CD4-positive, alpha-beta T cell (primary cell): ENCODE measurements at regions of chr9 and their contacts with region 1.

Region 1: DNA sequence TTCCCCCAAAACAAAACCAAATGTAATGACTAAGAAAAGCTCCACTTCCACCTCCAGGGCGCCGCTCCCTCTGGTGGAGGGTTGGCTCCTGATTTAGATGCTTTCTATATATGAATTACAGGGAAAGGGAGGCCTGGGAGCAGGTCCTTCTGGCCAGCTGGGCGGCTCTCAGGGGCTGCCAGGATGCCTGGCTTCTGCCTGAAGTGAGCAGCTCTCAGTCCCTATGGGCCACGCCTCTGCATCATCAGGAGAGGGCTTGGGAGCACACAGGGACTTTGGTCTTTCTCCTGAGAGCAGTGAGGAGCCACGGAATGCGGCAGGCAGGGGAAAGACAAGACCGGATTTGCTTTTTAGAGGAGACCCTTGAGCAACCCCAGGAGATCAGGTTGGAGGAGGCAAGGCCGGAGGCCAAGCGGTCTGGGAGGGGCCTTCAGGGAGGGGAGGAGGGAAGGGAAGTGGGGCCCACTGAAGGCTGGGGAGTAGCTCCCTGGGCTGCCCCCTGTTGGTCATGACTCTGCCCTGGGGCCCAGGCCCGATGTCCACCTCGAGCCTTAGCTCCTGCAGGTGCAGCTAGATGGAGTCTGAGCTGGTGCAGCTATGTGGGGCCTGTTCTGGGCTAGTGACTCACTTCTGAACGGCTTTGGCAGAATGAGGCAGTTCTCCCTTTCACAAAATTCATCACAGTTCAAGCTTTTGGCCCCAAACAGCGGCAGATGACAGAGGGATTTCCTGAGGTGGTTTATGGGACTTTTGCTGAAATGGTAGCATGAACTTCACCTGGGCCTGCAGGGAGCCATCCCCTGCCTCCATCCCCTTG is 11.3 kb upstream of the GRHPR start:
- DNase-seq: no peak
- ATAC-seq: no peak
- H3K4me3 ChIP-seq: no peak overlapping the region
- H3K4me3 Mint-ChIP-seq: no peak overlapping the region
- H3K27ac ChIP-seq: no peak overlapping the region
- H3K27ac Mint-ChIP-seq: no peak overlapping the region
- H3K4me1 ChIP-seq: peaks cover 29% of the 10 kb centered on the region
- H3K4me1 Mint-ChIP-seq: peaks cover 13% of the 10 kb centered on the region
- H3K27me3 ChIP-seq: no peaks in the 10 kb centered on the region
- H3K27me3 Mint-ChIP-seq: no peaks in the 10 kb centered on the region
- CTCF ChIP-seq: no peak

Region 2: GRCh38 chr9:36237230-36237629 is 1173.9 kb before region 1 on chr9:
- CTCF ChIA-PET with region 1: no interaction called
- POLR2A ChIA-PET with region 1: no interaction called
- intact Hi-C with region 1: no loop called
- DNase-seq: no peak
- ATAC-seq: no peak
- H3K4me3 ChIP-seq: no peak overlapping the region
- H3K4me3 Mint-ChIP-seq: no peak overlapping the region
- H3K27ac ChIP-seq: no peak overlapping the region
- H3K27ac Mint-ChIP-seq: no peak overlapping the region
- H3K4me1 ChIP-seq: no peaks in the 10 kb centered on the region
- H3K4me1 Mint-ChIP-seq: no peaks in the 10 kb centered on the region
- H3K27me3 ChIP-seq: no peaks in the 10 kb centered on the region
- H3K27me3 Mint-ChIP-seq: no peaks in the 10 kb centered on the region
- CTCF ChIP-seq: no peak

Region 3: GRCh38 chr9:37430841-37431597 is 19.8 kb after region 1 on chr9:
- CTCF ChIA-PET with region 1: no interaction called
- POLR2A ChIA-PET with region 1: no interaction called
- intact Hi-C with region 1: no loop called
- DNase-seq: no peak
- ATAC-seq: no peak
- H3K4me3 ChIP-seq: no peak overlapping the region
- H3K4me3 Mint-ChIP-seq: no peak overlapping the region
- H3K27ac ChIP-seq: no peak overlapping the region
- H3K27ac Mint-ChIP-seq: no peak overlapping the region
- H3K4me1 ChIP-seq: no peaks in the 10 kb centered on the region
- H3K4me1 Mint-ChIP-seq: peaks cover 1% of the 10 kb centered on the region
- H3K27me3 ChIP-seq: no peaks in the 10 kb centered on the region
- H3K27me3 Mint-ChIP-seq: no peaks in the 10 kb centered on the region
- CTCF ChIP-seq: no peak

Region 4: GRCh38 chr9:37511016-37512010 is 100.1 kb after region 1 on chr9:
- CTCF ChIA-PET with region 1: no interaction called
- POLR2A ChIA-PET with region 1: no interaction called
- intact Hi-C with region 1: loop called in 1 of 2 experiments (anchors 2 kb)
- DNase-seq: no peak
- ATAC-seq: no peak
- H3K4me3 ChIP-seq: no peak overlapping the region
- H3K4me3 Mint-ChIP-seq: no peak overlapping the region
- H3K27ac ChIP-seq: no peak overlapping the region
- H3K27ac Mint-ChIP-seq: no peak overlapping the region
- H3K4me1 ChIP-seq: peaks cover 9% of the 10 kb centered on the region
- H3K4me1 Mint-ChIP-seq: no peaks in the 10 kb centered on the region
- H3K27me3 ChIP-seq: no peaks in the 10 kb centered on the region
- H3K27me3 Mint-ChIP-seq: no peaks in the 10 kb centered on the region
- CTCF ChIP-seq: no peak

Region 5: DNA sequence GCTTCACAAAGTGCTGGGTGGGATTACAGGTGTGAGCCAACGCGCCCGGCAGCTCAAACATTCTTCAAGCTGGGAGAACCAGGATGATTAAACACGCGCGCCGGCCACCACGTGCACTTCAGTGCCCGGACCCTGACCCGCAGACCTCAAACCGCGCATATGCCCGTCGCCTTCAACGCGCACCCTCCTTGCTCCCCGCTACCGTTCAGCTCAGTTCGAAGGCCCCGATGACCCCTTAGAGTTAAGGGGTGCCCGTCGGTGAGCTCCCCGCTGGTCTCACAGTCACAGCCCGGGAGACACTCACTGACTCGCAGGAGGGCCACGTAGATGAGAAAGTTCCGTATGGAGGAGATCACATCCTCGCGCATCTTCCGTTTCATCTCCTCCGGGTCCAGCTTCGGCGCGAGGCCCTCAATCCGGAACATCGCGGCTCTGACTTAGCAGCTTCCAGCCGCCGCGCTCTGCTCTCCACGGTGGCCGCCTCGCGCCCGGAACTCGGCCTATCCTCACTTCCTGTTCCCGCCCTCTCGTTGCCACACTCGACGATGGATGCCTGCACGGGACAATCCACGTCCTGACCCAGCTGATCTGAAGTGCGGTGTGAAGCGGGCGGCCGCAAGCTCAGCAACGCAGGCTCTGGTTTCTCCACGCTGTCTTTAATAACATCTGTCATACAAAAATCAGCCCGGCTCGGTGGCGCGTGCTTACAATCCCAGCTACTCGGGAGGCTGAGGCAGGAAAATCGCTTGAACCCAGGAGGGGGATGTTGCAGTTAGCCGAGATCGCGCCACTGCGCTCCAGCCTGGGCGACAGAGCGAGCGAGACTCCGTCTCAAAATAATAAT is 181.2 kb after region 1 on chr9 and contains the start of gene TOMM5:
- CTCF ChIA-PET with region 1: no interaction called
- POLR2A ChIA-PET with region 1: no interaction called
- intact Hi-C with region 1: loop called in 1 of 2 experiments (anchors 5 kb)
- DNase-seq: peak; percentile 83 to 95 (median 86)
- ATAC-seq: peak; percentile 94
- H3K4me3 ChIP-seq: peak within 1 kb of the TSS; percentile 100
- H3K4me3 Mint-ChIP-seq: peak within 1 kb of the TSS; percentile 99
- H3K27ac ChIP-seq: peak within 1 kb of the TSS in 1 of 2 donors; percentile 64
- H3K27ac Mint-ChIP-seq: peak within 1 kb of the TSS; percentile 92
- H3K4me1 ChIP-seq: peaks cover 33% of the 10 kb centered on the region
- H3K4me1 Mint-ChIP-seq: peaks cover 50% of the 10 kb centered on the region
- H3K27me3 ChIP-seq: peaks cover 7% of the 10 kb centered on the region in 2 experiments
- H3K27me3 Mint-ChIP-seq: peaks cover 12% of the 10 kb centered on the region
- CTCF ChIP-seq: no peak
- total RNA-seq, gene TOMM5: 31.4 to 35.3 TPM